ENCODE measurements at regions of chr4 and their contacts with region 1.

Region 1: GRCh38 chr4:53908661-53909078 is 155.7 kb downstream of the CHIC2 start:
- DNase-seq: peak; percentile 55 to 88
- H3K4me3 ChIP-seq: no peak overlapping the region
- H3K4me1 ChIP-seq: 0 out of 2 replicates have a peak, but pooled peaks cover 9% of the 10 kb centered on the region
- H3K27me3 ChIP-seq: no peaks in the 10 kb centered on the region

Region 2: DNA sequence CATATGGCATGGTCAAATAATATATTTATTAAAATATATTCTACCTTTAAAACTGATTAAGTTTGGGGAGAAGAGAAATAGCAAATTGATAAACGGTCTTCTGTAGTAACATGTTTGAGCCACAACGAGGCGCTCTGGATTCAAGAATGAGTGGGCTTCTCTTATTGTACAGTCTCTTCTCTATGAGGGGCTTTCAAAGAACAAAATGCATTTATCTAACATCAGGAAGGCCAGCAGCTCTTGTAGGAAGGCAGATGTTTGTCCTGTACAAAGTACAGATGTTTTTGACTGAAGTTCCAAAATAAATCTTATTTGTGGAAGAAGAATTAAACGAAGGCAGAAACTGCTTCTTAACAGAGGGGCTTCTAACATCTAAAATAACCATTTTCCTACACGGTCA is 893.0 kb before region 1 on chr4:
- in situ Hi-C with region 1: loop called (anchors 25 kb)
- DNase-seq: peak; percentile 64 to 68
- H3K4me3 ChIP-seq: no peak overlapping the region
- H3K4me1 ChIP-seq: 0 out of 2 replicates have a peak, but pooled peaks cover 4% of the 10 kb centered on the region
- H3K27me3 ChIP-seq: no peaks in the 10 kb centered on the region

Region 3: DNA sequence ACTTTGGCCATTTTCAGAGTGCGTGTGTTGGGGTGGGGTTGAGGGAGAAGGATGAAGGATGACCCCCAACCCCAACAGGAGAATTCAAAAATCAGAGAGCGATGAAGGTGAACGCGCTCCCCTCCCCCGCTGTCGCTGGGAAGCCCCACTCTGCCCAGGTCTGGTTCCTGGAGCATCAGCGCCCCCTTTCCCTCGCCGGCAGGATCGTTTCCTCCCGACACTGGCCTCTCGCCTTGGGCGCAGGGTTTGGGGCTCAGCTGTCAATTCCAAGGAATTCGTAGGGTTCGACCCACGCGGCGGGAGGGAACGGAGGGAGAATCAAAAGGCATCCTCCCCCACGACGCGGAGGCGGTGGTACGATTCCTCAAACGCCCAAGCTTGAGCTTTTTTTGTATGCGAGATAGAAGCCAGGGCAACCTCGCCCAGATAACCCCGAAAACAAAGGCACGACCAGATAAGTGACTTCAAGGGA is 319.4 kb after region 1 on chr4:
- in situ Hi-C with region 1: loop called (anchors 5 kb)
- DNase-seq: peak; percentile 81 to 94
- H3K4me3 ChIP-seq: peak overlapping the region; percentile 55
- H3K4me1 ChIP-seq: peaks cover 26% of the 10 kb centered on the region
- H3K27me3 ChIP-seq: peaks cover 32% of the 10 kb centered on the region

Region 4: DNA sequence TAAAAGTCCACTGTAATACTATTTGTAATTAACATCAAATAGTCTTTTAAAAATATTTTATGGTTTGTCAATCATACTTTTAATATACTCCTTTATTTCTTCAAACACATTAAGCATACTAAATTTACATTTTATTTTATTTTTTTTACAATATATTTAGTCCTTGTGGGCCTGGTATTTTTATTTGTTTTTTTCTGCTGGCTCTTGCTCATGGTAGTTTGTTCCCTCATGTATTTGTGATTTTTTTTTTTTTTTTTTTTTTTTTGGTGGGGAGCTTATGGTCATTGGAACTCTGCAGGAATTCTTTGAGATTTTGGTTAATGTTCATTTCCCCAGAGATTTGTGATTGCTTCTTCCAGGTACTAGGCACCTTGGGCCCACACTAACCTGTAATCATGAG is 505.9 kb after region 1 on chr4:
- in situ Hi-C with region 1: no loop called
- DNase-seq: no peak
- H3K4me3 ChIP-seq: no peak overlapping the region
- H3K4me1 ChIP-seq: no peaks in the 10 kb centered on the region
- H3K27me3 ChIP-seq: no peaks in the 10 kb centered on the region